ENCODE measurements at regions of chr11 and their contacts with region 1.

Region 1: DNA sequence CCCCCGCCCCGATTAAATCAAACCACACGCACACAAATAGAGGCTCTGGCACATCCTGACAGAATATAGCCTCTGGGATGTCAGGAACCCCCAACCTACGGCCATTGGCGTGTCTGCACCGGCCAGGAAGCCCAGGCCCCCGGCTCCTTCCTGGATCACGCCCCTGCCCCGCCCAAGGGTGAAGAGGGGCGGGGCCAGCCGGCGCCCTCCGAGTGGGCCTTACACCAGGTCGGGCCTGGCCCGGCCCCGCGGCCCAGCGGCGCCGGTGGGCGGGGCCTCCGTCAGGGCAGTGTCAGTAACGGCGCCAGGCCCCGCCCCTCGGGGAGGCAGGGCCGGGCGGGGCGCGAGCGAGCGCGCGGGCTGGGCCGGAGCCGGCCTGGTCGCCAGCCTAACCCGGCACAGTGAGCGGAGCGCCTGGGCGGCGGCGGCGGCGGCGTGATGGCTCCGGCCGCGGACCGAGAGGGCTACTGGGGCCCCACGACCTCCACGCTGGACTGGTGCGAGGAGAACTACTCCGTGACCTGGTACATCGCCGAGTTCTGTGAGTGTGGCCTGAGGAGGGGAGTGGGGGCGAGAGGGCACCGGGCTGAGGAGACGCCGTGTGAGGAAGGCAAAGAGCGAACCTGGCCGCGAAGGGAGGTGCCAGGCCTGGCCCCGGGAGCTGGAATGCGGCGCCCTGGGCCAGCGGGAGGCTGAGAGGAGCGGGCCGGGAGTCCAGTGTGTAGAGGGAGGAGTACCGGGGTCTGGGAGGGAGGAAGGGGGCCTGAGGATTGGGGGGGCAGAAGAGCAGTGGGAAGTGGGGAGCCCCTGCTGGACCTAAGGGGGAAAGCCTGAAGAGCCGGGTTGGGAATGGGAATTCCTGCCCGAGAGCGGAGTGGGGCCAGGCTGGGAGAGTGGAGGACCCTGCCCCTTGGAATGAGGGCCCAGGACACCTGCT is at the start of gene ACER3:
- DNase-seq: peak; percentile 89
- H3K4me3 ChIP-seq: peak within 1 kb of the TSS; percentile 44 to 92 (median 62)
- H3K27ac ChIP-seq: peak within 1 kb of the TSS; percentile 77
- H3K4me1 ChIP-seq: peaks cover 13% of the 10 kb centered on the region
- H3K27me3 ChIP-seq: no peaks in the 10 kb centered on the region
- CTCF ChIP-seq: peak in 1 of 2 donors; percentile 51
- POLR2A ChIP-seq: peak; percentile 93
- total RNA-seq, gene ACER3: 22.4 and 31.6 TPM in 2 replicates

Region 2: GRCh38 chr11:76686261-76687079 is 174.3 kb before region 1 on chr11:
- CTCF ChIA-PET with region 1: no interaction called
- POLR2A ChIA-PET with region 1: no interaction called
- dilution Hi-C with region 1: no loop called
- intact Hi-C with region 1: no loop called
- DNase-seq: no peak
- H3K4me3 ChIP-seq: no peak overlapping the region
- H3K27ac ChIP-seq: no peak overlapping the region
- H3K4me1 ChIP-seq: no peaks in the 10 kb centered on the region
- H3K27me3 ChIP-seq: no peaks in the 10 kb centered on the region
- CTCF ChIP-seq: no peak
- POLR2A ChIP-seq: no peak

Region 3: DNA sequence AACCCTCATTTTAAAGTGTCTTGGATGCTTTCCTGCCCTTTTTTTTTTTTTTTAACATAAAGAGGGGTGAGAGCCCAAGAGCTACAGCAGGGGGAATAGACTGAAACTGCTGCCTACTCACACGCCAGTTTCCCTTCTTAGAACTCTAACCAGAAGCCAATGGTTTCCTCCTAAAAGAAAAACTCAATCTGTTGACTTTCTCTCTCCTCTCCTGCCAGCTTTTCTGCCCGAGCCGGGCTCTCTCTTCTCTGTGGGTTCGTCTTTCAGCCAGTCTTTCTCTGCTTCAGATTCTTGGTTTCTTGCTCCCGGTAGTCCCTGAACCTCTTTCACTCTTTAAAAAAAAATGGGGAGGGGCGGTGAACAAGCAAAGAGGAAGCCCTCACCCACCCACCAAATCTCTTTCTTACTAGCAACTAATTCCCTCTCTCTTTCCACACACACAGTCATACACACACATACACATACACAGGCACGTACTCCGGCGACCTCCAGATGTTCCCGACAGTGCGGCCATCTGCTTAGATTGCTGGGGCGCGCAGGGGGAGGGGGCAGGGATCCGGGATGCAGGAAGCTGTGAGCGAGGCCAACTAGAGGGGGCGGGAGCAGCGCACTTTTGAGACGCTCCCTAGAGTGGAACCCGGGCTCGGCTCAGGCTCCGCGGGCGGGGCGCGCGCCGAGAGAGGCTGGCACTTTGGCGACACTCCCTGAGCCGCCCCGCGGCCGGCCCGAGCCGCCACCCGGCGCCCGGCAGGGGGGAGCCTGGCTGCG is 78.1 kb before region 1 on chr11:
- CTCF ChIA-PET with region 1: no interaction called
- POLR2A ChIA-PET with region 1: no interaction called
- dilution Hi-C with region 1: no loop called
- intact Hi-C with region 1: loop called (anchors 2 kb)
- DNase-seq: peak; percentile 86
- H3K4me3 ChIP-seq: peak overlapping the region; percentile 68 to 91 (median 84)
- H3K27ac ChIP-seq: peak overlapping the region; percentile 44
- H3K4me1 ChIP-seq: peaks cover 2% of the 10 kb centered on the region
- H3K27me3 ChIP-seq: peaks cover 0 to 2% of the 10 kb centered on the region in 2 experiments
- CTCF ChIP-seq: no peak
- POLR2A ChIP-seq: peak; percentile 74

Region 4: GRCh38 chr11:76807206-76807875 is 53.5 kb before region 1 on chr11:
- CTCF ChIA-PET with region 1: interaction called, 8 read pairs
- POLR2A ChIA-PET with region 1: no interaction called
- dilution Hi-C with region 1: no loop called
- intact Hi-C with region 1: loop called (anchors 1 kb)
- DNase-seq: peak; percentile 76
- H3K4me3 ChIP-seq: no peak overlapping the region
- H3K27ac ChIP-seq: no peak overlapping the region
- H3K4me1 ChIP-seq: peaks cover 3% of the 10 kb centered on the region
- H3K27me3 ChIP-seq: no peaks in the 10 kb centered on the region
- CTCF ChIP-seq: peak; percentile 80 to 87
- POLR2A ChIP-seq: no peak

Region 5: DNA sequence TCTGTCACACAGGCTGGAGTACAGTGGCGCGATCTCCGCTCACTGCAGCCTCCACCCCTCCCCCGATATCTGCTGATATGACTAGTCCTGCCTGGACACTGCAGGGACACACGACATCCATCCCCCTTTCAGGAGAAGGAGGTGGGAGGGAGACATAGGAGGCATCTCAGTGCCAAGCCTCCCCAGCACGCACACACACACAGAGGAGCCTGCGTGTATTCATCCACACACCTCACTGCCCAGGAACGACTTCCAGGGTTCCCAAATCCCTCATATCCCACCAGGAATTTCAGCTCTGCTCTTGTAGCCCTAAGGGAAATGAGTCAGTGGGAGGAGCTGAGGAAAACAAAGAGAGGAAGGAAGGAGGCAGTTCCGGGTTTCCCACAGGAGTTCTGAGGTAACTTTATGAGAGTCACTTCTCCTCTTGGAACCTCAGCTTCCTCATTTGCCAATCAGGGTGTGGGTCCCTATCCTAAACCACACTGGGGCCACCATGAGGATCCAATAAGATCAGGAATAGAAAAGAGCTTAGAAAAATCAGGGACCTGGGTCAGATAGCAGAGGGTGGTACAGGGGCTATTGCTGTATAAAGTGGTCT is 37.2 kb before region 1 on chr11:
- CTCF ChIA-PET with region 1: interaction called, 8 read pairs
- POLR2A ChIA-PET with region 1: no interaction called
- dilution Hi-C with region 1: no loop called
- intact Hi-C with region 1: loop called (anchors 1 kb)
- DNase-seq: peak; percentile 97
- H3K4me3 ChIP-seq: peak overlapping the region in 2 of 3 experiments; percentile 25 to 55
- H3K27ac ChIP-seq: peak overlapping the region; percentile 99
- H3K4me1 ChIP-seq: peaks cover 31% of the 10 kb centered on the region
- H3K27me3 ChIP-seq: no peaks in the 10 kb centered on the region
- CTCF ChIP-seq: no peak
- POLR2A ChIP-seq: peak; percentile 68

Region 6: GRCh38 chr11:76880314-76880713 is 19.5 kb after region 1 on chr11:
- CTCF ChIA-PET with region 1: no interaction called
- POLR2A ChIA-PET with region 1: interaction called, 4 read pairs
- dilution Hi-C with region 1: no loop called
- intact Hi-C with region 1: loop called (anchors 1 kb)
- DNase-seq: peak; percentile 59
- H3K4me3 ChIP-seq: no peak overlapping the region
- H3K27ac ChIP-seq: peak overlapping the region; percentile 18
- H3K4me1 ChIP-seq: peaks cover 33% of the 10 kb centered on the region
- H3K27me3 ChIP-seq: no peaks in the 10 kb centered on the region
- CTCF ChIP-seq: no peak
- POLR2A ChIP-seq: no peak

Region 7: DNA sequence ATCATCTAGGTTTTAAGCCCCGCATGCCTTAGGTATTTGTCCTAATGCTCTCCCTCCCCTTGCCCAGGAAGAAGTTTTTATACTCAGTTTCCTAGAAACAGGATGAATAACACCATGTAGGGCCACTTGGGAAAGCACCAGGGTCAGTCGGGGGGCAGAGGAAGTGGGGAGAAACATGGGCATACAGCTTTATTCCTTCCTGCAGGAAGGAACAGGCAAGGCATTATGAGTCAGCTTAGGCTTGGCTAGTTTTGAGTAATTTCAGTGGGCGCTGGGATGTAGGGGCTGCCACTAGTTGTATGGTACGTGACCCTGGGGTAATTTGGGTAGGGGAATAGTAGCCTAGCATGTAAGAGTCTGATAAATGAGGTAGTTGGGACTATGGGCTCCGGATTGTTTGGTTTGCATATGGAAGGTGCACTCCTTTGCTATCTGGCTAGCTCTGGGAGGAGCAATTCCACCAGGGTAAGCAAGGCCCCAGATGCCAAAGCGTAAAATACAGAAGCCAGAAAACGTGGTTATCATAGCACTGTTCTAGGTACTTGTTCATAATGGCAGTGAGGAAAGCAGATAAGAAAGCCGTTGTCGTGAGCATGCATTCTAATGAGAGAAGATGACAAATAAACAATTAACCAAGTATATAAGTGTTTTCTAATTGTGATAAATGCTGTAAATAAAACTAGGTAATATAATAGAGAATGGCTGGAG is 24.7 kb after region 1 on chr11:
- CTCF ChIA-PET with region 1: interaction called, 3 read pairs
- POLR2A ChIA-PET with region 1: interaction called, 4 read pairs
- dilution Hi-C with region 1: no loop called
- intact Hi-C with region 1: loop called (anchors 1 kb)
- DNase-seq: peak; percentile 96
- H3K4me3 ChIP-seq: no peak overlapping the region
- H3K27ac ChIP-seq: peak overlapping the region; percentile 54
- H3K4me1 ChIP-seq: peaks cover 35% of the 10 kb centered on the region
- H3K27me3 ChIP-seq: no peaks in the 10 kb centered on the region
- CTCF ChIP-seq: no peak
- POLR2A ChIP-seq: no peak

Region 8: DNA sequence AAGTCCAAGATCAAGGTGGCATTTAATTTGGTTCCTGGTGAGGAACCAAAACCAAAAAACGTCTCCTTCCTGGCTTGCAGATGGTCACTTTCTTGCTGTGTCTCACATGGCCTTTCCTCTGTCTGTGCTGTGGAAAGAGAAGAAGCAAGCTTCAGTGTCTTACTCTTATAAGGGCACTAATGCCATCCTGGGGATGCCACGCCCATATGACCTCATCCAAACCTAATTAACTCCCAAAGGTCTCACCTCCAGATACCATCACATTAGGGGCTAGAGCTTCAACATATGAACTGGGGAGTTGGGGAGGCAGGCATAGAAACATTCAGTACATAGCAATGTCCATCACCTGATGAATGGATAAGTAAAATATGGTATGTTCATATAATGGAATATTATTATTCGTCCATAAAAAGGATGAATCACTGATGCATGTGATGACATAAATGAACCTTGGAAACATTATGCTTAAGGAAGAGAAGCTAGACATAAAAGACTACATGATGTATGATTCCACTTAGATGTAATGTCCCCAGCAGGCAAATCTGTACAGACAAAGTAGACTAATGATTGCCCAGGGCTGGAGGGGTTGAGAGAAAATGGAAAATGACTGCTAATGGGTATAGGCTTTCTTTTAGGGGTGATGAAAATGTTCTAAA is 94.8 kb after region 1 on chr11:
- CTCF ChIA-PET with region 1: no interaction called
- POLR2A ChIA-PET with region 1: no interaction called
- dilution Hi-C with region 1: no loop called
- intact Hi-C with region 1: no loop called
- DNase-seq: no peak
- H3K4me3 ChIP-seq: no peak overlapping the region
- H3K27ac ChIP-seq: no peak overlapping the region
- H3K4me1 ChIP-seq: no peaks in the 10 kb centered on the region
- H3K27me3 ChIP-seq: no peaks in the 10 kb centered on the region
- CTCF ChIP-seq: no peak
- POLR2A ChIP-seq: no peak

Measured in endothelial cell of umbilical vein (primary cell).